ENCODE measurements at regions of chr16 and their contacts with region 1.

Region 1: GRCh38 chr16:29852654-29853053 is 10.4 kb downstream of the CDIPT start:
- DNase-seq: no peak
- H3K4me3 ChIP-seq: no peak overlapping the region
- H3K27ac ChIP-seq: peak overlapping the region; percentile 34
- H3K4me1 ChIP-seq: no peaks in the 10 kb centered on the region
- H3K27me3 ChIP-seq: no peaks in the 10 kb centered on the region
- CTCF ChIP-seq: no peak

Region 2: GRCh38 chr16:29694384-29695195 is 158.1 kb before region 1 on chr16:
- intact Hi-C with region 1: loop called (anchors 10 kb)
- DNase-seq: no peak
- H3K4me3 ChIP-seq: no peak overlapping the region
- H3K27ac ChIP-seq: no peak overlapping the region
- H3K4me1 ChIP-seq: no peaks in the 10 kb centered on the region
- H3K27me3 ChIP-seq: no peaks in the 10 kb centered on the region
- CTCF ChIP-seq: no peak

Region 3: DNA sequence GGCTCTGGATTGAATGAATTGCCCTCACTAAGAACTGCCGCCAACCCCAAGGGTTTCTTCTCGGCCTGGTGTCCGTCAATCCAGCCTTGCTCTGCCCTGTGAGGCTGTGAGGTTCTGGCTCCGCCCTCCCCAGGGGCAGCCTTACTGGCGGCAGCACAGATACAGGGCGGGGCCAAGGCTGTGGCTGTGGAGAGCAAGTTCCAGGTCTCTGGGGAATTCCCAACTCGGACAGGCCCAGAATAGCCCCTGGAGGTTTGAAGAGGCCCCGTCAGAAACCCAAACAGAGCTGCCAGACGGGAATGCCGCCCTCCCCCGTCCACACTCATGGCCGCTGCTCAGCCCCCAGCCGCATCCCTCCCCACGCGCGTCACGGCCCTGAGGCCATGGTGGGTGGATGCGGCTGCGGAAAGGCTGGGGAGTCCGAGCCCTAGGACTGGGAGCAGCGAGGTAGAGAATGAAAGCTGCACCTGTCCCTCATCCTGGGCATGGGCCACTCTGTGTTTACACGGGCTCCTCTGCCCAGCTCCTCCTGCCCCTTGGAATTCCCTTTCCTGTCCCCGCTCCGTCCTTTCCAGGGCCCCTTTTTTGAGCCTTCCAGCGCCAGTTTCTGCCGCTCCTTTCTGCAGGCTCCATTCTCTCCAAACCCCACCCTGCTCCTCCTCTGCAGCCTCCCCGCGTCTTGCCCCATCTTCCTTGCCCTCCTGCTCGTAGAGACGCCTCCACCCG is 41.3 kb before region 1 on chr16:
- intact Hi-C with region 1: loop called (anchors 5 kb)
- DNase-seq: peak; percentile 97
- H3K4me3 ChIP-seq: peak overlapping the region; percentile 49
- H3K27ac ChIP-seq: peak overlapping the region; percentile 88
- H3K4me1 ChIP-seq: peaks cover 35% of the 10 kb centered on the region
- H3K27me3 ChIP-seq: no peaks in the 10 kb centered on the region
- CTCF ChIP-seq: no peak

Region 4: DNA sequence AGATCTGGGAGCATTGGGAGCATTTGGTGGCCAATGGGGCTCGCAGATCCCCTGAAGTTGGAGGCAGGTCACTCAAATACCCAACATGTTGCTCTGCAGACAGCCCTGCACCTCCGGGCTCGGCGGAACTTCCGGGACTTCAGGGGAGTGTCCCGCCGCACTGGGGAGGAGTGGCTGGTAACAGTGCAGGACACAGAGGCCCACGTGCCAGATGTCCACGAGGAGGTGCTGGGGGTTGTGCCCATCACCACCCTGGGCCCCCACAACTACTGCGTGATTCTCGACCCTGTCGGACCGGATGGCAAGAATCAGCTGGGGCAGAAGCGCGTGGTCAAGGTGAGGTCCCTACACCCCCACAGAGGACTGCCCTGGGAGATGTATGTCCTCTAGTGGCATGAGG is 16.0 kb before region 1 on chr16:
- intact Hi-C with region 1: loop called (anchors 2 kb)
- DNase-seq: no peak
- H3K4me3 ChIP-seq: no peak overlapping the region
- H3K27ac ChIP-seq: no peak overlapping the region
- H3K4me1 ChIP-seq: no peaks in the 10 kb centered on the region
- H3K27me3 ChIP-seq: no peaks in the 10 kb centered on the region
- CTCF ChIP-seq: no peak